ENCODE measurements at regions of chr6 and their contacts with region 1.

Region 1: DNA sequence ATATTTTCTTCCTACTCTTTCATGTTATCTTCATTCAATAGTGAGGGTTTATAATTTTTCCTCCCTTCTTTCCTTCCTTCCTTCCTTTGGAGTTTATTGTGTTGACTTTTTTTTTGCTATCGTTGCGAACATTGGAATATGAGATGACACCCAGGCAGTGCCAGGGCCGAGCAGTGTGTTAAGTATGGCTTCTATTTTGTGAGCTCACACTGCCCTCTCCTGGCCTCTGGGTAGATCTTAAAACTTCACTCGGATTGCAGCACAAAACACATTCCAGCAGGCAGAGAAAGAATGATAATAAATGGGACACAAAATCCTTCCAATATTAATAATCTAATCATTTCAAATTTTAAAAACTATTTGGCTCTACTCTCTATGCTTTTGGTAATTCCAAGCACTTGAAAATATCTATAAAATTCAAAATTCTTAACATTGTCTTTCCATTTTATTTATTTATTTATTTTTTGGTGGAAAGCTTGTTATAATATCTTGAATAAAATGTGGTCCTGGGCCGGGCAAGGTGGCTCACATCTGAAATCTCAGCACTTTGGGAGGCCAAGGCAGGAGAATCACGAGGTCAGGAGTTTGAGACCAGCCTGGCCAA is 147.4 kb upstream of the OLIG3 start:
- DNase-seq: peak in 3 of 4 donors; percentile 62 to 78 (median 64)
- ATAC-seq: peak; percentile 89
- H3K4me3 ChIP-seq: no peak overlapping the region
- H3K27ac ChIP-seq: no peak overlapping the region
- H3K4me1 ChIP-seq: peaks cover 0 to 5% of the 10 kb centered on the region in 2 donors
- H3K27me3 ChIP-seq: no peaks in the 10 kb centered on the region
- CTCF ChIP-seq: peak; percentile 49 to 60

Region 2: GRCh38 chr6:137094411-137095008 is 547.1 kb before region 1 on chr6:
- intact Hi-C with region 1: loop called in 1 of 2 experiments (anchors 10 kb)
- DNase-seq: peak in 2 of 4 donors; percentile 51 to 77
- ATAC-seq: peak; percentile 88
- H3K4me3 ChIP-seq: no peak overlapping the region
- H3K27ac ChIP-seq: no peak overlapping the region
- H3K4me1 ChIP-seq: peaks cover 0 to 11% of the 10 kb centered on the region in 2 donors
- H3K27me3 ChIP-seq: no peaks in the 10 kb centered on the region
- CTCF ChIP-seq: peak; percentile 63 to 72

Region 3: DNA sequence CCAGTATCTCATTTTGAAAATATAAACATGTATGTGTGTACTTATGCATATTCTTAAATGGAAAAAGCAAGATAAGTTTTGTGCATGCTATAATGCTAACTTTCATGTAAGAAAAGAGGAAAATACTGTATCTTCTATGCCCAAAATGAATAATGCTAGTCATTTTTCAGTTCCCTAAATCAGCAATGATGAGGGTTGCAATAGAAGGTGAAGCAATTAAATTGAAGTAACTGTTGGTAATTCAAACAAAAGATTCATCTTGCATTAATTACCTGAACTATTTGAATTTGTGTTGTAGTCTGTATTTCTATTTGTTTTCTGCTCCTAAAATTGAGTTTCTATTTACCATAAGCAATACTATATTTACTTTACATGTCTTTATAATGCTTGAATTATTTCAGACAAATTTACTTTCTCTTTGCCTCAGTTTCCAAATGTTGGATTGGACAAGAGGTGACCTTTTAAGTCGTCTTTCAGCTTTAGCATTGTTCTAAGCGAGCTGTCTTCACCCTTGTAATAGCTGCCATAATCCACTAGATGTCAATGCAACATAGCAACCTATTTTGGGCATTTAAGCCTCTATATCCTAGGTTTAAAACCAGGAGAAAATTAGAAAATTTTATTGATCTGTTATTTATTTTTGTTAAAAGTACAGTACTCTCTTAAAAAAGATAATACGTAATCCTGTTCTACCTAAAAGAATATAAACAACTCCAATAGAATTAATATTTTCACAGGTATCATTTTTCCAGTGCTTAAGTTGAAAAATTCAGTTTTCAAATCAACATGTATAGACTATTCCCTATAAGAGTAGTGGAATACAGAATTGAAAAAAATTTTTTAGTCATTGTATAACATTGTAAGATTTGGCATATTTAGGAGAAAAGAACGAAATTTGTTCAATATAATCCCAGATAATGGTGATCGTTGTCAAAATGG is 370.1 kb before region 1 on chr6:
- intact Hi-C with region 1: loop called in 1 of 2 experiments (anchors 10 kb)
- DNase-seq: peak in 2 of 4 donors; percentile 29 to 49
- ATAC-seq: peak; percentile 90
- H3K4me3 ChIP-seq: no peak overlapping the region
- H3K27ac ChIP-seq: no peak overlapping the region
- H3K4me1 ChIP-seq: peaks cover 3 to 24% of the 10 kb centered on the region in 2 donors
- H3K27me3 ChIP-seq: no peaks in the 10 kb centered on the region
- CTCF ChIP-seq: peak; percentile 86 to 95

Region 4: GRCh38 chr6:137415127-137415833 is 226.3 kb before region 1 on chr6:
- intact Hi-C with region 1: no loop called
- DNase-seq: peak; percentile 50 to 74 (median 70)
- ATAC-seq: peak; percentile 98
- H3K4me3 ChIP-seq: peak overlapping the region; percentile 29 to 36
- H3K27ac ChIP-seq: peak overlapping the region; percentile 48 to 79
- H3K4me1 ChIP-seq: peaks cover 0 to 6% of the 10 kb centered on the region in 2 donors
- H3K27me3 ChIP-seq: peaks cover 5 to 23% of the 10 kb centered on the region in 2 donors
- CTCF ChIP-seq: peak; percentile 53 to 67

Region 5: DNA sequence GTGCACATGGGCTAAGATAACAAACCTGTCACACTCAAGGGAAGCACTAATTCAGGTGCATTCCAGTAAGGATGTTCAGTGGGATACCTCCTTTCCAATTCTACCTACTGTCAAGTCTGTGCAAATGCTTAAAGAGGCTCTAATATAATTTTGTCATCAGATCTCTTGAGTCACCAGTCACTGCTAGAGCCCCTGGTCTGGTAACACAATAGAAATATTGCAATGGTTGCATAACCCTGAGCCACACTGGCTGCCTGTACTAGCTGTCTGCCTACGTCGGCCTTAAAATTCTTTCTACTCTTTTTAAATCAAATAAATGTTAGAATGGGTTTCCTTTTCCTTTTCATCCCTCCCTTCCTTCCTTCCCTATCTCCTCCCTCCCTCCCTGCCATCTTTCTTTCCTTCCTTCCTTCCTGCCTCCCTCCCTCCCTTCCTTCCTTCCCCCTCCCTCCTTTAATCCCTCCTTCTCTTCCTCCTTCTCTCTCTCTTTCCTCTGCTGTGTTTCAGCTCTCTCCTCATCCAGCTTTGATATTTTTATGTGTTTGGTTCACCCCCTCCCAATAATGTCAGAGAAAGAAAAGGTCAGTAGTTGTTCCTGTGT is 119.3 kb before region 1 on chr6:
- intact Hi-C with region 1: no loop called
- DNase-seq: no peak
- ATAC-seq: no peak
- H3K4me3 ChIP-seq: no peak overlapping the region
- H3K27ac ChIP-seq: no peak overlapping the region
- H3K4me1 ChIP-seq: no peaks in the 10 kb centered on the region
- H3K27me3 ChIP-seq: peaks cover 34 to 65% of the 10 kb centered on the region in 2 donors
- CTCF ChIP-seq: no peak

Region 6: GRCh38 chr6:137744877-137745276 is 103.3 kb after region 1 on chr6:
- intact Hi-C with region 1: no loop called
- DNase-seq: no peak
- ATAC-seq: no peak
- H3K4me3 ChIP-seq: no peak overlapping the region
- H3K27ac ChIP-seq: no peak overlapping the region
- H3K4me1 ChIP-seq: no peaks in the 10 kb centered on the region
- H3K27me3 ChIP-seq: no peaks in the 10 kb centered on the region
- CTCF ChIP-seq: no peak